Mammary epithelial cell (primary cell): ENCODE measurements at regions of chr6 and their contacts with region 1.

Region 1: DNA sequence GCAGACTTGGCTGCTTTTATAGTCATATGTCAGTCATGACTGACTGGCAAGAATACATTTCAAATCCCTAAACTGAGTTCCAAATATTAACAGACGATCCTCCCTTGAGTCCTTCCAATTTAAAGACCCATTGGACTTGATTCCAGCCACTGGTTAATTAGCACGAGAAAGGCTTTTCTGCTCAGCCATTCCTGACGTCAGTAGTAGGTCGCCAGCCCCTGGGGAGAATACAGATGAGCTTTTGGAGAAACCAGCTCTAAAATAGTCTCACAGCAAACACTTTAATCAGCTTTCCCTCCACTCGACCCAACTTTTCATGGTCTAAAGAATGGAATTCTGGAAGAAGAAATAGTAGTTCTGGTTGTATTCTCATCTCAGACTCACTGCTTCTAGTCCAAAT is 91.6 kb downstream of the SLC22A3 start:
- DNase-seq: no peak
- H3K4me3 ChIP-seq: no peak overlapping the region
- H3K27ac ChIP-seq: no peak overlapping the region
- H3K4me1 ChIP-seq: no peaks in the 10 kb centered on the region
- H3K27me3 ChIP-seq: no peaks in the 10 kb centered on the region
- CTCF ChIP-seq: no peak

Region 2: GRCh38 chr6:160355001-160355400 is 84.8 kb before region 1 on chr6:
- CTCF ChIA-PET with region 1: no interaction called
- dilution Hi-C with region 1: no loop called
- in situ Hi-C with region 1: no loop called
- intact Hi-C with region 1: no loop called
- DNase-seq: peak; percentile 70
- H3K4me3 ChIP-seq: no peak overlapping the region
- H3K27ac ChIP-seq: no peak overlapping the region
- H3K4me1 ChIP-seq: peaks cover 7% of the 10 kb centered on the region
- H3K27me3 ChIP-seq: no peaks in the 10 kb centered on the region
- CTCF ChIP-seq: no peak

Region 3: DNA sequence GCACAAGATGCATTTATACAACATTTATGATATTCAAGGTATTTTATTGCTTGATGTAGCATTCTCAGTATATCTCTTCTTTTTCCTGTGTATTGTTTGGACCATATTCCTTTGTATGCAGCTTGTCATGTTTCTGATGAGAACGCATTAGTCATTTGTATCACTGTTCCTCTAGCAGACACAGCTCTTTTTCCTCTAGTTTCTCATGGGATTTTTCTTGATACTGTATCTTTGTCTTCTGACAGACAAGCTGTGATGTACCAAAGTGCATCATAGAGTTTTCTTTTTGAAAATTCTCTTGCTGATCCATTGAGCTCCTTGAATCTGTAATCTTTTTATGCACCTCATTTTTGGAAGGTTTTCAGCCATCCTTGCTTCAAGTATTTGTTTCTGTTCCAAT is 49.3 kb after region 1 on chr6:
- CTCF ChIA-PET with region 1: no interaction called
- dilution Hi-C with region 1: no loop called
- in situ Hi-C with region 1: no loop called
- intact Hi-C with region 1: no loop called
- DNase-seq: no peak
- H3K4me3 ChIP-seq: no peak overlapping the region
- H3K27ac ChIP-seq: no peak overlapping the region
- H3K4me1 ChIP-seq: no peaks in the 10 kb centered on the region
- H3K27me3 ChIP-seq: peaks cover 8% of the 10 kb centered on the region
- CTCF ChIP-seq: no peak

Region 4: GRCh38 chr6:160500639-160501038 is 60.9 kb after region 1 on chr6:
- CTCF ChIA-PET with region 1: no interaction called
- dilution Hi-C with region 1: loop called (anchors 5 kb)
- in situ Hi-C with region 1: no loop called
- intact Hi-C with region 1: no loop called
- DNase-seq: no peak
- H3K4me3 ChIP-seq: no peak overlapping the region
- H3K27ac ChIP-seq: no peak overlapping the region
- H3K4me1 ChIP-seq: no peaks in the 10 kb centered on the region
- H3K27me3 ChIP-seq: peaks cover 3% of the 10 kb centered on the region
- CTCF ChIP-seq: no peak

Region 5: DNA sequence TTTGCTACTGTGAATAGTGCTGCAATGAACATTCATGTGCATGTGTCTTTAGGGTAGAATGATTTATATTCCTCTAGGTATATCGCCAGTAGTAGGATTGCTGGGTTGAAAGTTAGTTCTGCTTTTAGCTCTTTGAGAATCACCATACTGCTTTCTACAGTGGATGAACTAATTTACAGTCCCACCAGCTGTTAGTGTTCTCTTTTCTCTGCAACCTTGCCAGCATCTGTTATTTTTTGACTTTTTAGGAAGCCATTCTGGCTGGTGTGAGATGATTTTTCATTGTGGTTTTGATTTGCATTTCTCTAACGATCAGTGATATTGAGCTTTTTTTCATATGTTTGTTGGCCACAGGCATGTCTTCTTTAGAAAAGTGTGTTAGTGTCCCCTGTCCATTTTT is 302.3 kb after region 1 on chr6:
- CTCF ChIA-PET with region 1: no interaction called
- dilution Hi-C with region 1: no loop called
- in situ Hi-C with region 1: no loop called
- intact Hi-C with region 1: no loop called
- DNase-seq: no peak
- H3K4me3 ChIP-seq: no peak overlapping the region
- H3K27ac ChIP-seq: no peak overlapping the region
- H3K4me1 ChIP-seq: no peaks in the 10 kb centered on the region
- H3K27me3 ChIP-seq: no peaks in the 10 kb centered on the region
- CTCF ChIP-seq: no peak